CD8-positive, alpha-beta memory T cell (primary cell): ENCODE measurements at regions of chr1 and their contacts with region 1.

Region 1: GRCh38 chr1:26417111-26417759 is 6.6 kb downstream of the LIN28A start:
- DNase-seq: peak; percentile 70 to 88 (median 75)
- H3K4me3 ChIP-seq: no peak overlapping the region
- H3K4me3 Mint-ChIP-seq: no peak overlapping the region
- H3K27ac ChIP-seq: no peak overlapping the region
- H3K27ac Mint-ChIP-seq: peak overlapping the region in 1 of 8 donors; percentile 66
- H3K4me1 ChIP-seq: no peaks in the 10 kb centered on the region
- H3K4me1 Mint-ChIP-seq: peaks cover 0 to 1% (median 0%) of the 10 kb centered on the region in 3 donors
- H3K27me3 ChIP-seq: peaks cover 20% of the 10 kb centered on the region
- H3K27me3 Mint-ChIP-seq: peaks cover 21 to 35% of the 10 kb centered on the region in 2 donors

Region 2: GRCh38 chr1:25989440-25990234 is 427.6 kb before region 1 on chr1:
- CTCF ChIA-PET with region 1: no interaction called
- POLR2A ChIA-PET with region 1: no interaction called
- DNase-seq: no peak
- H3K4me3 ChIP-seq: peak overlapping the region; percentile 81
- H3K4me3 Mint-ChIP-seq: peak overlapping the region; percentile 77 to 96 (median 91)
- H3K27ac ChIP-seq: peak overlapping the region; percentile 57
- H3K27ac Mint-ChIP-seq: peak overlapping the region; percentile 58 to 99 (median 95)
- H3K4me1 ChIP-seq: peaks cover 71% of the 10 kb centered on the region
- H3K4me1 Mint-ChIP-seq: peaks cover 65 to 81% (median 77%) of the 10 kb centered on the region in 3 donors
- H3K27me3 ChIP-seq: no peaks in the 10 kb centered on the region
- H3K27me3 Mint-ChIP-seq: no peaks in the 10 kb centered on the region

Region 3: DNA sequence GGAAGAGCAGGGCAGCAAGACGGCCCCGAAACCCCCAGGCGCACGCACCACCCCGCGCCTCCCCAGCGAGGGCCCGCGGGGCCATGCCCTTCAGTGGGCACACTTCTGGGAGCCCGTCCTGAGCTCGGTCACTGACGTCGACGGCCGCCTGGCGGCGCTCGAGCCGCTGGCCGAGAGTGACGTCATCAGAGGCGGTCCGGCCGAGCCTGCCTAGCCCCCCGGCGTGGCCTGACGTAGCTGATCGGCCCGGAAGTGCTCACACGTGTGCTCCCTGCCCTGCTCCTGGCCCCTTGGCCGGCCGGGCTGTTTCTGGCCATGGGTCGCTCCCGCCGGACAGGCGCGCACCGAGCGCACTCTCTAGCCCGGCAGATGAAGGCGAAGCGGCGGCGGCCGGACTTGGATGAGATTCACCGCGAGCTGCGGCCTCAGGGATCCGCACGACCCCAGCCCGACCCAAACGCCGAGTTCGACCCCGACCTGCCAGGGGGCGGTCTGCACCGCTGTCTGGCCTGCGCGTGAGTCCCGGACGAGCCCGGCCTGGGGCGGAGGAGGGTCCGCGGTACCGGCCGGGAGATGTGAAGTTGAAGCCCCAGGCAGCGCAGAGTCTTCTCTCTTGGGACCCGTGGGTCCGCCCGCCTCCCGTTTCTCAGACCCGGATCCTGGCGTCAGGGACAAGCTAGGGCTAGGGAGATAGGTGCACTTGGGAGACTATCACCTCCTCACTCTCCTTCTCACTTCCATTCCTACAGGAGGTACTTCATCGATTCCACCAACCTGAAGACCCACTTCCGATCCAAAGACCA is 247.4 kb before region 1 on chr1 and contains the start of gene ZNF593:
- CTCF ChIA-PET with region 1: interaction called, 10 read pairs
- POLR2A ChIA-PET with region 1: no interaction called
- DNase-seq: peak; percentile 71 to 88 (median 81)
- H3K4me3 ChIP-seq: peak within 1 kb of the TSS; percentile 68
- H3K4me3 Mint-ChIP-seq: peak within 1 kb of the TSS; percentile 86 to 95 (median 88)
- H3K27ac ChIP-seq: peak within 1 kb of the TSS; percentile 86
- H3K27ac Mint-ChIP-seq: peak within 1 kb of the TSS; percentile 39 to 97 (median 85)
- H3K4me1 ChIP-seq: peaks cover 17% of the 10 kb centered on the region
- H3K4me1 Mint-ChIP-seq: peaks cover 12 to 25% (median 22%) of the 10 kb centered on the region in 3 donors
- H3K27me3 ChIP-seq: no peaks in the 10 kb centered on the region
- H3K27me3 Mint-ChIP-seq: peaks cover 0 to 2% of the 10 kb centered on the region in 2 donors
- total RNA-seq, gene ZNF593: 86.4 to 87.9 TPM

Region 4: GRCh38 chr1:26279456-26280332 is 137.5 kb before region 1 on chr1 and contains the start of gene SH3BGRL3:
- CTCF ChIA-PET with region 1: interaction called, 42 read pairs
- POLR2A ChIA-PET with region 1: interaction called, 5 read pairs
- DNase-seq: peak; percentile 80 to 88 (median 85)
- H3K4me3 ChIP-seq: peak within 1 kb of the TSS; percentile 85
- H3K4me3 Mint-ChIP-seq: peak within 1 kb of the TSS; percentile 82 to 97 (median 93)
- H3K27ac ChIP-seq: peak within 1 kb of the TSS; percentile 86
- H3K27ac Mint-ChIP-seq: peak within 1 kb of the TSS; percentile 88 to 99 (median 96)
- H3K4me1 ChIP-seq: peaks cover 86% of the 10 kb centered on the region
- H3K4me1 Mint-ChIP-seq: peaks cover 78 to 87% (median 83%) of the 10 kb centered on the region in 3 donors
- H3K27me3 ChIP-seq: no peaks in the 10 kb centered on the region
- H3K27me3 Mint-ChIP-seq: no peaks in the 10 kb centered on the region
- total RNA-seq, gene SH3BGRL3: 447 to 472 TPM

Region 5: GRCh38 chr1:26315874-26316850 is 101.1 kb before region 1 on chr1:
- CTCF ChIA-PET with region 1: interaction called, 17 read pairs
- POLR2A ChIA-PET with region 1: interaction called, 3 read pairs
- DNase-seq: no peak
- H3K4me3 ChIP-seq: no peak overlapping the region
- H3K4me3 Mint-ChIP-seq: peak overlapping the region; percentile 46 to 97 (median 89)
- H3K27ac ChIP-seq: peak overlapping the region; percentile 52
- H3K27ac Mint-ChIP-seq: peak overlapping the region; percentile 14 to 94 (median 71)
- H3K4me1 ChIP-seq: peaks cover 54% of the 10 kb centered on the region
- H3K4me1 Mint-ChIP-seq: peaks cover 64 to 71% (median 67%) of the 10 kb centered on the region in 3 donors
- H3K27me3 ChIP-seq: no peaks in the 10 kb centered on the region
- H3K27me3 Mint-ChIP-seq: peaks cover 0 to 2% of the 10 kb centered on the region in 2 donors

Region 6: GRCh38 chr1:26358411-26359384 is 58.5 kb before region 1 on chr1:
- CTCF ChIA-PET with region 1: interaction called, 17 read pairs
- POLR2A ChIA-PET with region 1: interaction called, 4 read pairs
- DNase-seq: peak; percentile 61 to 87 (median 75)
- H3K4me3 ChIP-seq: peak overlapping the region; percentile 23
- H3K4me3 Mint-ChIP-seq: peak overlapping the region; percentile 60 to 84 (median 69)
- H3K27ac ChIP-seq: no peak overlapping the region
- H3K27ac Mint-ChIP-seq: peak overlapping the region; percentile 61 to 91 (median 78)
- H3K4me1 ChIP-seq: peaks cover 36% of the 10 kb centered on the region
- H3K4me1 Mint-ChIP-seq: peaks cover 44 to 60% (median 47%) of the 10 kb centered on the region in 3 donors
- H3K27me3 ChIP-seq: peaks cover 14% of the 10 kb centered on the region
- H3K27me3 Mint-ChIP-seq: peaks cover 11 to 21% of the 10 kb centered on the region in 2 donors

Region 7: DNA sequence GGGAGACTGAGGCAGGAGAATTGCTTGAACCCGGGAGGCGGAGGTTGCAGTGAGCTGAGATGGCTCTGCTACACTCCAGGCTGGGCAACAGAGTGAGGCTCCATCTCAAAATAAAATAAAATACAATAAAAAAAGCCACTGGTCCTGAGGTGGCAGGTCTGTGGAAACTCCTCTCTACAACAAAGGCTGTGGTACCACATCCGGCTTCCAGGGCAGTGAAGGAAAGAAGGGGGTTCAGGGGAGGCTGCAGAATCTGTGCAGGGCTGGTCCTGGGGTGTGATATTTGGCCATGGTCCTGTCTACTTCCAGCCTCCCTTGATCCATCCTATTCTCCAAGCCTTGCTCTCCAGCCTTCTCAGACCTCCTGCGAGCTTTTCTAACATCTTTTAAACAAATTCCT is 44.0 kb before region 1 on chr1:
- CTCF ChIA-PET with region 1: interaction called, 14 read pairs
- POLR2A ChIA-PET with region 1: no interaction called
- DNase-seq: peak; percentile 27 to 69 (median 51)
- H3K4me3 ChIP-seq: peak overlapping the region; percentile 3
- H3K4me3 Mint-ChIP-seq: peak overlapping the region; percentile 1 to 71 (median 55)
- H3K27ac ChIP-seq: no peak overlapping the region
- H3K27ac Mint-ChIP-seq: peak overlapping the region; percentile 48 to 93 (median 80)
- H3K4me1 ChIP-seq: peaks cover 90% of the 10 kb centered on the region
- H3K4me1 Mint-ChIP-seq: peaks cover 81 to 92% (median 90%) of the 10 kb centered on the region in 3 donors
- H3K27me3 ChIP-seq: no peaks in the 10 kb centered on the region
- H3K27me3 Mint-ChIP-seq: peaks cover 0 to 1% of the 10 kb centered on the region in 2 donors

Region 8: GRCh38 chr1:26391450-26391849 is 25.8 kb before region 1 on chr1:
- CTCF ChIA-PET with region 1: interaction called, 22 read pairs
- POLR2A ChIA-PET with region 1: no interaction called
- DNase-seq: peak in 4 of 5 donors; percentile 24 to 73 (median 46)
- H3K4me3 ChIP-seq: no peak overlapping the region
- H3K4me3 Mint-ChIP-seq: peak overlapping the region in 3 of 7 donors; percentile 0 to 22 (median 18)
- H3K27ac ChIP-seq: no peak overlapping the region
- H3K27ac Mint-ChIP-seq: peak overlapping the region in 4 of 8 donors; percentile 1 to 15 (median 4)
- H3K4me1 ChIP-seq: peaks cover 10% of the 10 kb centered on the region
- H3K4me1 Mint-ChIP-seq: peaks cover 32 to 45% (median 35%) of the 10 kb centered on the region in 3 donors
- H3K27me3 ChIP-seq: no peaks in the 10 kb centered on the region
- H3K27me3 Mint-ChIP-seq: peaks cover 0 to 9% of the 10 kb centered on the region in 2 donors